Activated CD8-positive, alpha-beta T cell treated with anti-CD3 and anti-CD28 coated beads, Interleukin-2, amount 10 ng/mL, durations not matched to agents 7 days and 5 days (primary cell): ENCODE measurements at regions of chr11 and their contacts with region 1.

Region 1: GRCh38 chr11:9015677-9016076 is 11.9 kb upstream of the NRIP3 start:
- DNase-seq: peak; percentile 73
- ATAC-seq: peak; percentile 93
- H3K4me3 Mint-ChIP-seq: no peak overlapping the region
- H3K27ac Mint-ChIP-seq: no peak overlapping the region
- H3K4me1 Mint-ChIP-seq: peaks cover 20% of the 10 kb centered on the region
- H3K27me3 Mint-ChIP-seq: peaks cover 15% of the 10 kb centered on the region

Region 2: GRCh38 chr11:8989453-8989852 is 26.2 kb before region 1 on chr11:
- CTCF ChIA-PET with region 1: interaction called, 19 read pairs
- POLR2A ChIA-PET with region 1: no interaction called
- DNase-seq: no peak
- ATAC-seq: no peak
- H3K4me3 Mint-ChIP-seq: no peak overlapping the region
- H3K27ac Mint-ChIP-seq: no peak overlapping the region
- H3K4me1 Mint-ChIP-seq: peaks cover 9% of the 10 kb centered on the region
- H3K27me3 Mint-ChIP-seq: peaks cover 23% of the 10 kb centered on the region

Region 3: DNA sequence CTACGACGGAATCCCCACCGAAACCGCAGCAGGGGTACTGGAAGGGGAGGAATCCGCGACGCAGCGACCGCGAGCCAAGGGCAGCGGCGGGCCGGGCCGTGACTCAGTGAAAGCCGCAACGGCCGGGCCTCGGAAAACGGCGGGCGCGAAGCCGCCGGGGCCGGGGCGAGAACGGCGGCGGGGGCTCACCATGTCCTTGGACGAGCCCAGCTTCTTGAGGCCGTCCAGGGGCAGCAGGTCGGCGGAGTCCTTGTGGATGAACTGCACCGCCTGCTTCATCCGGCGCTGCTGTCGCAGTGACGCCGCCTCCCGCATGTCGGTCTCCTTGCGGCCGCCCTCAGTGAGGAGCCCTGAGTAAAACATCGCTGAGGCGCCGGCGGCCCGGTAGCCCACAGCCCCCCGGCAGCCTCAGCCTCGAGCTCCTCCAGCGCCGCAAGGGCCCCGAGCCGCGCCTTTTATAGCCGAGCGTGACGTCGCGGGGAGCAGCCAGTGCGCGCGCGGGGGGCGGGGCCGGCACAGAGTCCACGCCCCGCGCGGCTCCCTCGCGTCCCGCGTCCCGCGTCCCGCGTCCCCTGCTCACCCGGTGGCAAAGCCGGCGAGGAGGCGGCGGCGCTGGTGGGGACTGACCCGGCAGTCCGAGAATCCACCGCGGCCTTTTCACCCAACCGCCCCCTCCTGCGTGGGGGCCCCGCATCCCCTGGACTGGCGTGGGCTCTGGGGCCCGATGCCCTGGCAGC is 11.9 kb before region 1 on chr11 and contains the start of gene NRIP3:
- CTCF ChIA-PET with region 1: interaction called, 28 read pairs
- POLR2A ChIA-PET with region 1: interaction called, 5 read pairs
- DNase-seq: peak; percentile 77
- ATAC-seq: peak; percentile 89
- H3K4me3 Mint-ChIP-seq: peak within 1 kb of the TSS; percentile 71
- H3K27ac Mint-ChIP-seq: no peak within 1 kb of the TSS
- H3K4me1 Mint-ChIP-seq: peaks cover 17% of the 10 kb centered on the region
- H3K27me3 Mint-ChIP-seq: peaks cover 70% of the 10 kb centered on the region
- total RNA-seq, gene NRIP3: 0.11 to 0.47 TPM

Region 4: DNA sequence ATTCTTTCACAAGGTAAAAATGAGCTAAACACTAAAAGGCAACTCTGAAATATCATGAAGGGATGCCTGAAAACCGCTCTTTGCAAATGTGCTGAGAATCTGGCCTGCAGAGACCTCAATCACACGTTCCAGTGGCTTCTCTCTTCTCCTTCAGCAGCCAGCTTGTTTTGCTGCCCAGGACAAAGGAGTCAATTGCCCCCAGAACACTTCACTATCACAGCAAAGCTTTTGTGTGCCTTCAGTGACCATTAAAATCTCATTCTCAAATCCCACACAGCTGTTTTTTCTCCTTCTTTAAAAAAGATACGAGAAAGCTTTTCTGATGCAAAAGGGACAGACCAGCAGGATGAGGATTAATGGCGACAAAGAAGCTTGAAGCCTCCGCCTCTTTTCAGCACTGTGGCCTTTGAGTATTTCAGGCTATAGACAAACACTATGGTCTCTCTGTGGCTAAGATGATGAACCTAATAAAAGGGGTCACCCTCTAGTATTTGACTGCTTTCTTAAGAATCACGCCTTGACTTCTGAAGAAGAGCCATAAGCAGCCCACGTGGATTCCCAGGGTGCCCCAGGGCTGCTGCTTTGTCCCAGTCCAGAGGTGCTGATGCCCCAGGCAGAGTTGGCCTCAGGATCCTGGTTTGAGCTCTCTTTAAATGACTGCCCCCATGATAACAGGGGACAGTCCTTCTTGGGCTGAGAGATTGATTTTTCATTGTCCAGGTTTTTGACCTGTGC is 21.5 kb after region 1 on chr11:
- CTCF ChIA-PET with region 1: interaction called, 11 read pairs
- POLR2A ChIA-PET with region 1: no interaction called
- DNase-seq: no peak
- ATAC-seq: no peak
- H3K4me3 Mint-ChIP-seq: no peak overlapping the region
- H3K27ac Mint-ChIP-seq: no peak overlapping the region
- H3K4me1 Mint-ChIP-seq: no peaks in the 10 kb centered on the region
- H3K27me3 Mint-ChIP-seq: peaks cover 17% of the 10 kb centered on the region

Region 5: GRCh38 chr11:9092853-9093778 is 77.4 kb after region 1 on chr11:
- CTCF ChIA-PET with region 1: interaction called, 36 read pairs
- POLR2A ChIA-PET with region 1: no interaction called
- DNase-seq: no peak
- ATAC-seq: no peak
- H3K4me3 Mint-ChIP-seq: no peak overlapping the region
- H3K27ac Mint-ChIP-seq: no peak overlapping the region
- H3K4me1 Mint-ChIP-seq: peaks cover 4% of the 10 kb centered on the region
- H3K27me3 Mint-ChIP-seq: peaks cover 51% of the 10 kb centered on the region